ENCODE measurements at regions of chr13 and their contacts with region 1.

Region 1: GRCh38 chr13:74883834-74884233 is 598.1 kb downstream of the TBC1D4 start:
- DNase-seq: no peak
- H3K4me3 ChIP-seq: no peak overlapping the region
- H3K27ac ChIP-seq: no peak overlapping the region
- H3K4me1 ChIP-seq: no peaks in the 10 kb centered on the region
- H3K27me3 ChIP-seq: no peaks in the 10 kb centered on the region
- CTCF ChIP-seq: no peak
- POLR2A ChIP-seq: no peak

Region 2: DNA sequence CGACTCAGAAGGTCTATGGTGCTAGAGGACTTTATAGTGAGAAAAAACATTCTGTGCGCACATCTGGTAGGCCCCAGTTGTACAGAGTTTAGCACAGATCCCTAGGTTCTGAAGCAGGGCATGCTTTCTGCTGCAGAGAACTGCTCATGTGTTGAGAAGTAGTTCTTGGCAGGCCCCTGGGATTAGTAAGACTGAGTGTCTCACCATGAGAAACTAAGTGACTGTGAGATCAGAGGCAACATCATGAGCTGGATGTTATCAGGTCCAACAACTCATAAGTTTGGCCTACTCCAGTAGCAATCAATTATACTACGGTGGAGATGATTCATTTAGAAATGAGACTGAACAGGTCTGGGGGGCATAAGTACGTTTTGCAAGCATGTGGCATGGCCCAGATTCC is 242.2 kb before region 1 on chr13:
- intact Hi-C with region 1: loop called (anchors 5 kb)
- DNase-seq: no peak
- H3K4me3 ChIP-seq: no peak overlapping the region
- H3K27ac ChIP-seq: no peak overlapping the region
- H3K4me1 ChIP-seq: no peaks in the 10 kb centered on the region
- H3K27me3 ChIP-seq: no peaks in the 10 kb centered on the region
- CTCF ChIP-seq: no peak
- POLR2A ChIP-seq: no peak

Region 3: GRCh38 chr13:74930402-74931165 is 46.8 kb after region 1 on chr13:
- intact Hi-C with region 1: no loop called
- DNase-seq: no peak
- H3K4me3 ChIP-seq: no peak overlapping the region
- H3K27ac ChIP-seq: no peak overlapping the region
- H3K4me1 ChIP-seq: no peaks in the 10 kb centered on the region
- H3K27me3 ChIP-seq: no peaks in the 10 kb centered on the region
- CTCF ChIP-seq: no peak
- POLR2A ChIP-seq: no peak

Measured in breast epithelium (tissue), 4 donors.